ENCODE measurements at regions of chr5 and their contacts with region 1.

Region 1: DNA sequence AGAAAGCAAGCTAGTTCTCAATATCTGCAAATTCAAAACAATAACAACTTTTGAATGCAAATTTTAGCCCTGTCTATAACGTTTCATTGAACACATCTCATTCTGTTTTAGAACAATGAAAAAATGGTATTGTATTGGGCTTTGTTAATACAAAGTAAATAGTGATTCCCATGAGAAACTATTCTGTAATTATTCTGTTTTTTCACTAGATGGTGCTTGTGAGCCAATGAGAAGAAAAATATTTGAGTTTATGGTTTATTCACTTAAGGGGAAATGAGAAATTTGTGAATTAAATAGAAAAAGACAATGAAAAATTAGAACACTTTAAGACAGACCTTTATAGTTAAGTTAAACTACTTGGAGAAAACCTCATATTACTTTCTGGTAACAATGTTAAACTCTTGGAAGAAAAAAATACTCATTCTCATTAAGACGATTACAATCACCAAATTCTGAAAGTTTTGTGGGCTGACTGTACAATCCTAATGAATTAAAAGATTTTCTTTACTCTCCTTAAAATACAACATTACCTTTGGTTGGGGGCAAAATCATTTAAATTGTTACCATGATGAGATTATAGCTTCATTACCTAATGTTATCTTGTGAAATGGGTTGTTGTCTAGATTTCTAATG is 127.0 kb downstream of the NNT start:
- DNase-seq: peak; percentile 12
- H3K4me3 ChIP-seq: no peak overlapping the region
- H3K27ac ChIP-seq: no peak overlapping the region
- H3K4me1 ChIP-seq: no peaks in the 10 kb centered on the region
- H3K27me3 ChIP-seq: peaks cover 2% of the 10 kb centered on the region
- CTCF ChIP-seq: peak; percentile 41 to 53

Region 2: DNA sequence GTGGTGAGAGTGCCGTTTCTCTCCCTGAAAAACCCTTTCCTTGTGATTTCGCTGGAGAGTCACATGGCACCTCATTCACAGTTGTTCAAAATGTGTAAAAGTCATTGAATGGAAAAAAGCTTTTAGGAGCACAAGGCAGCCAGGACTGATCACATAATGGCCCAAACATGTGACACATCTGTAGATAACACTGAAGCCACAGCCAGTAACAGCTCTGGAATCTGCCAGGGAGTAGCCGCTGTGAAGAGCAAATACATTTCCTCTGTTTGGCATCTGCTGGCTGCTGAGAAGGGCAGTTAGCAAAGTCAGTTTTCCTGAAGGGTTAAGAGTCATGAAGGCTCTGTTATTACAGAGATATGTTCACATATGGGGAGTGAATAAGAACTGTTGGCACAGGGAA is 144.8 kb after region 1 on chr5:
- CTCF ChIA-PET with region 1: no interaction called
- dilution Hi-C with region 1: no loop called
- in situ Hi-C with region 1: no loop called
- intact Hi-C with region 1: loop called (anchors 10 kb)
- DNase-seq: no peak
- H3K4me3 ChIP-seq: no peak overlapping the region
- H3K27ac ChIP-seq: no peak overlapping the region
- H3K4me1 ChIP-seq: no peaks in the 10 kb centered on the region
- H3K27me3 ChIP-seq: no peaks in the 10 kb centered on the region
- CTCF ChIP-seq: no peak

Region 3: GRCh38 chr5:44002381-44002901 is 272.5 kb after region 1 on chr5:
- CTCF ChIA-PET with region 1: no interaction called
- dilution Hi-C with region 1: no loop called
- in situ Hi-C with region 1: no loop called
- intact Hi-C with region 1: loop called (anchors 5 kb)
- DNase-seq: no peak
- H3K4me3 ChIP-seq: no peak overlapping the region
- H3K27ac ChIP-seq: no peak overlapping the region
- H3K4me1 ChIP-seq: no peaks in the 10 kb centered on the region
- H3K27me3 ChIP-seq: no peaks in the 10 kb centered on the region
- CTCF ChIP-seq: no peak

Region 4: DNA sequence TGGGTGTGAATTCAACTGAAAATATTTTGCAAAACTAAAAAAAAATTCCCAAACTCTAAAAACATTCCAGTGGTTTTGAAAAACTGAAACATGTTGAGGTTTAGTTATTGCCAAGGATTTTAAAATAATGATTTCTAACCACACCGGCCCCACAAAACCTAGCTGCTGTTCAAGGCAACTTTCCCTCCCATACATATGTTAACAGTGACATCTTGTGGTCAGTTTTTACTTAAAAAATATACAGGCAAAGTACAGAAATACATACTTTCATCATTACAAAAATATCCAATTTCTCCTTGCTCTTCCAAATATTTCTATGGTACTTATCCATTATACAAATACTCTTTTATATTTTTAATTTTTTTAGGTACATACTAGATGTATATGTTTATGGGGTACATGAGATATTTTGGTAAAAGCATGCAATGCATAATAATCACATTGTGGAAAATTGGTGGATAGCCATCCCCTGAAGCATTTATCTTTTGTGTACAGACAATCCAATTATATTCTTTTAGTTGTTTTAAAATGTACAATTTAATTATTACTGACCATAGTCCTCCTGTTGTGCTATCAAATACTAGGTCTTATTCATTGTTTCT is 1044.4 kb after region 1 on chr5:
- CTCF ChIA-PET with region 1: no interaction called
- dilution Hi-C with region 1: no loop called
- in situ Hi-C with region 1: no loop called
- intact Hi-C with region 1: loop called (anchors 5 kb)
- DNase-seq: peak; percentile 27
- H3K4me3 ChIP-seq: no peak overlapping the region
- H3K27ac ChIP-seq: no peak overlapping the region
- H3K4me1 ChIP-seq: no peaks in the 10 kb centered on the region
- H3K27me3 ChIP-seq: no peaks in the 10 kb centered on the region
- CTCF ChIP-seq: peak; percentile 32 to 58

Measured in mammary epithelial cell (primary cell).